ENCODE measurements at regions of chr3 and their contacts with region 1.

Region 1: GRCh38 chr3:69306239-69307185 is 79.4 kb downstream of the FRMD4B start:
- DNase-seq: peak; percentile 69 to 74 (median 72)
- H3K4me3 ChIP-seq: no peak overlapping the region
- H3K4me3 Mint-ChIP-seq: peak overlapping the region in 2 of 8 donors; percentile 2 to 30
- H3K27ac ChIP-seq: no peak overlapping the region
- H3K27ac Mint-ChIP-seq: peak overlapping the region in 2 of 7 donors; percentile 19 to 28
- H3K4me1 ChIP-seq: no peaks in the 10 kb centered on the region
- H3K4me1 Mint-ChIP-seq: peaks cover 4 to 8% (median 6%) of the 10 kb centered on the region in 4 donors
- H3K27me3 ChIP-seq: no peaks in the 10 kb centered on the region
- H3K27me3 Mint-ChIP-seq: no peaks in the 10 kb centered on the region

Region 2: GRCh38 chr3:69178838-69179739 is 127.4 kb before region 1 on chr3:
- CTCF ChIA-PET with region 1: interaction called, 19 read pairs
- POLR2A ChIA-PET with region 1: no interaction called
- intact Hi-C with region 1: no loop called
- DNase-seq: no peak
- H3K4me3 ChIP-seq: no peak overlapping the region
- H3K4me3 Mint-ChIP-seq: peak overlapping the region in 5 of 8 donors; percentile 0 to 46 (median 11)
- H3K27ac ChIP-seq: no peak overlapping the region
- H3K27ac Mint-ChIP-seq: peak overlapping the region in 6 of 7 donors; percentile 35 to 86 (median 64)
- H3K4me1 ChIP-seq: peaks cover 15% of the 10 kb centered on the region
- H3K4me1 Mint-ChIP-seq: peaks cover 11 to 25% (median 19%) of the 10 kb centered on the region in 4 donors
- H3K27me3 ChIP-seq: no peaks in the 10 kb centered on the region
- H3K27me3 Mint-ChIP-seq: no peaks in the 10 kb centered on the region

Region 3: GRCh38 chr3:69236812-69237707 is 69.5 kb before region 1 on chr3:
- CTCF ChIA-PET with region 1: interaction called, 9 read pairs
- POLR2A ChIA-PET with region 1: no interaction called
- intact Hi-C with region 1: loop called (anchors 5 kb)
- DNase-seq: peak in 1 of 5 donors; percentile 16
- H3K4me3 ChIP-seq: no peak overlapping the region
- H3K4me3 Mint-ChIP-seq: peak overlapping the region; percentile 67 to 89 (median 84)
- H3K27ac ChIP-seq: no peak overlapping the region
- H3K27ac Mint-ChIP-seq: peak overlapping the region; percentile 50 to 95 (median 62)
- H3K4me1 ChIP-seq: peaks cover 31% of the 10 kb centered on the region
- H3K4me1 Mint-ChIP-seq: peaks cover 15 to 29% (median 21%) of the 10 kb centered on the region in 4 donors
- H3K27me3 ChIP-seq: no peaks in the 10 kb centered on the region
- H3K27me3 Mint-ChIP-seq: no peaks in the 10 kb centered on the region

Region 4: GRCh38 chr3:69320871-69321271 is 14.4 kb after region 1 on chr3:
- CTCF ChIA-PET with region 1: interaction called, 28 read pairs
- POLR2A ChIA-PET with region 1: no interaction called
- intact Hi-C with region 1: no loop called
- DNase-seq: no peak
- H3K4me3 ChIP-seq: no peak overlapping the region
- H3K4me3 Mint-ChIP-seq: no peak overlapping the region
- H3K27ac ChIP-seq: no peak overlapping the region
- H3K27ac Mint-ChIP-seq: no peak overlapping the region
- H3K4me1 ChIP-seq: no peaks in the 10 kb centered on the region
- H3K4me1 Mint-ChIP-seq: peaks cover 0 to 11% (median 0%) of the 10 kb centered on the region in 4 donors
- H3K27me3 ChIP-seq: no peaks in the 10 kb centered on the region
- H3K27me3 Mint-ChIP-seq: no peaks in the 10 kb centered on the region

Region 5: GRCh38 chr3:70028361-70028760 is 721.8 kb after region 1 on chr3:
- CTCF ChIA-PET with region 1: no interaction called
- POLR2A ChIA-PET with region 1: no interaction called
- intact Hi-C with region 1: no loop called
- DNase-seq: no peak
- H3K4me3 ChIP-seq: no peak overlapping the region
- H3K4me3 Mint-ChIP-seq: no peak overlapping the region
- H3K27ac ChIP-seq: no peak overlapping the region
- H3K27ac Mint-ChIP-seq: no peak overlapping the region
- H3K4me1 ChIP-seq: no peaks in the 10 kb centered on the region
- H3K4me1 Mint-ChIP-seq: no peaks in the 10 kb centered on the region
- H3K27me3 ChIP-seq: no peaks in the 10 kb centered on the region
- H3K27me3 Mint-ChIP-seq: peaks cover 0 to 2% of the 10 kb centered on the region in 2 donors

Measured in CD4-positive, alpha-beta memory T cell (primary cell).